A549 (cell line): ENCODE measurements at regions of chr6 and their contacts with region 1.

Region 1: DNA sequence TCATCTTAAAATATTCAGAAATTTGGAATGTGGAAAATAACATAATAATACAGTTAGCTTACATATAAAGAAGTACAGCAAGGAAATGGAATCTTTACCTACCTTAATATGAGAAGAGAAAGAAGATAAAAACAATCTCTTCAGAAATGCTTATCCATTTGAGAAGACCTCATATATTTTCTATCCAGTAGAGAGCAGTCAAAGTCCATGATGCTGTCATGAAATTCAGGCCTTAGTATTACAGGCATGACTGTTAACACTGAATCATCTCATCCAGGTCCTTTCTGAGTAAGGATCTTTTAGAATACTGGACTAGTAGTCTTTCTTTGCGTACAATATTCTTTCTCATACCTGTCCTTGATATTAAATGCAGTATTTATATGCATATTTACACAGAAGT is 713.4 kb downstream of the CD109 start:
- DNase-seq: peak; percentile 0 to 55
- ATAC-seq: peak; percentile 68 to 74; a peak in 5 of 6 replicates
- H3K4me3 ChIP-seq: no peak overlapping the region
- H3K27ac ChIP-seq: no peak overlapping the region
- H3K4me1 ChIP-seq: no peaks in the 10 kb centered on the region
- CTCF ChIP-seq: peak; percentile 67
- EP300 ChIP-seq: no peak
- POLR2A ChIP-seq: no peak
- RAD21 ChIP-seq: peak; percentile 85 to 91

Region 2: DNA sequence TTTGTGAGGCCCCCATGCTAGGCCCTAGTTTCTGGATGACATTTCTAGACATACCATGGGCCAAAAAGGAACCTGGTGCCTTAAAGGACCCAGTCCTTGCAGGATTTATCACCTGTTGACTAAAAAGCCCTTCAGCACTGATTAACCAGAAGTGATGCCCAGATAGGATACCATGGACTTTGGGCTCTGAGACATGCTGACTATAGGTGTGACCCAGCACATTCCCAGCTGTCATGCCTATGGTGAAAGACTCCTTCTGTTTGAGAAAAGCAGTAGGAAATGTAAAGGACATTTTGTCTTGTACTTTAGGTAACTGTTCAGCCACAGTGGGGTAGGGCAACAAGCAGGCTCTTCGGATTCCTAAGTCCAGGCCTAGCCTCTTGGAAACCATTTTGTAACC is 10.8 kb after region 1 on chr6:
- CTCF ChIA-PET with region 1: no interaction called
- POLR2A ChIA-PET with region 1: no interaction called
- DNase-seq: peak in 1 of 2 experiments; percentile 4
- ATAC-seq: no peak
- H3K4me3 ChIP-seq: no peak overlapping the region
- H3K27ac ChIP-seq: no peak overlapping the region
- H3K4me1 ChIP-seq: no peaks in the 10 kb centered on the region
- CTCF ChIP-seq: no peak
- EP300 ChIP-seq: no peak
- POLR2A ChIP-seq: no peak
- RAD21 ChIP-seq: no peak

Region 3: DNA sequence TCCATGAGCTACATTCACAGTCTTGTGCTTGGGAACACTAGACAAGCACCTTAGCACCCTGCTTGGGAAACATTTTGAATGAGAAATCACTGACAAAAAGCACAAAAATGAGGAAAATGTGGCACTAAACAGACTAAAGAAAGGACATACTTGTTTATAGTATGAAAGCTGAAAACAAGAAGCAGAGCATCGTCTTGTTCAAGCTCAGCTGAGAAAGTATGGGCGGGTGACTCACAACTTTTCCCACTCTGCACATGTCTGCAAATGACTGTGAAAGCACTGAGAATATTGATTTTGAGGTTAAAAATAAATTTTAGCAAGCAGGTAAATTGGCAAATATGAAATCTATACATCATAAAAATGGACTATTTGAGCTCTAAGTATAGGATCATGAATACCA is 71.1 kb after region 1 on chr6:
- CTCF ChIA-PET with region 1: no interaction called
- POLR2A ChIA-PET with region 1: no interaction called
- DNase-seq: no peak
- ATAC-seq: no peak
- H3K4me3 ChIP-seq: no peak overlapping the region
- H3K27ac ChIP-seq: no peak overlapping the region
- H3K4me1 ChIP-seq: no peaks in the 10 kb centered on the region
- CTCF ChIP-seq: no peak
- EP300 ChIP-seq: no peak
- POLR2A ChIP-seq: no peak
- RAD21 ChIP-seq: no peak

Region 4: GRCh38 chr6:74574794-74575193 is 165.3 kb after region 1 on chr6:
- CTCF ChIA-PET with region 1: interaction called, 12 read pairs
- POLR2A ChIA-PET with region 1: no interaction called
- DNase-seq: peak in 1 of 2 experiments; percentile 50
- ATAC-seq: peak; percentile 78 to 85
- H3K4me3 ChIP-seq: no peak overlapping the region
- H3K27ac ChIP-seq: no peak overlapping the region
- H3K4me1 ChIP-seq: peaks cover 19% of the 10 kb centered on the region
- CTCF ChIP-seq: peak; percentile 40
- EP300 ChIP-seq: no peak
- POLR2A ChIP-seq: no peak
- RAD21 ChIP-seq: peak; percentile 55 to 66

Region 5: DNA sequence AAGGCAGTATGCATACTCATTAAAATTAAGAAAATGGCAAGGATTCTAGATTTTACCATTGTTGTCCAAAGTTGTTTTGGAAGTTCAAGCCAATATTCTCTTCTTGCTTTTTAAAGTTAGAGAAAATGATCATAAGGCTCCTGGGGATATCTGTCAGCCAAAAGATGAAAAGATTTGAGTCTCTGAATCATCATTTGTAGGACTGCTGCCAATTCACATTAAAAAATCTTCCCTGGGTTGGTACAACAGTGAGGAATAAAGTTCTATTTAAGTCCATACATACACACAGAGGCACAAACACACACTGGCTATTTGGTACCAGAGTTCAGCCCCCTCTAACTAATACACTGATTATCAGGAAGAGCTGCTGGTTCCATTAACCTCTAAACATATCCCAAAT is 176.3 kb after region 1 on chr6:
- CTCF ChIA-PET with region 1: no interaction called
- POLR2A ChIA-PET with region 1: no interaction called
- DNase-seq: no peak
- ATAC-seq: no peak
- H3K4me3 ChIP-seq: no peak overlapping the region
- H3K27ac ChIP-seq: no peak overlapping the region
- H3K4me1 ChIP-seq: peaks cover 7% of the 10 kb centered on the region; the same call in 1 of the 3 replicates
- CTCF ChIP-seq: no peak
- EP300 ChIP-seq: no peak
- POLR2A ChIP-seq: no peak
- RAD21 ChIP-seq: no peak

Region 6: GRCh38 chr6:74840953-74841352 is 431.5 kb after region 1 on chr6:
- CTCF ChIA-PET with region 1: no interaction called
- POLR2A ChIA-PET with region 1: no interaction called
- DNase-seq: no peak
- ATAC-seq: no peak
- H3K4me3 ChIP-seq: no peak overlapping the region
- H3K27ac ChIP-seq: no peak overlapping the region
- H3K4me1 ChIP-seq: no peaks in the 10 kb centered on the region
- CTCF ChIP-seq: no peak
- EP300 ChIP-seq: no peak
- POLR2A ChIP-seq: no peak
- RAD21 ChIP-seq: no peak